ENCODE measurements at regions of chr12 and their contacts with region 1.

Region 1: GRCh38 chr12:132414634-132415326 is 75.2 kb upstream of the FBRSL1 start:
- DNase-seq: peak; percentile 83
- H3K27ac ChIP-seq: no peak overlapping the region; the same call in 1 of the 2 replicates
- CTCF ChIP-seq: peak; percentile 87

Region 2: GRCh38 chr12:132153501-132154340 is 261.1 kb before region 1 on chr12:
- CTCF ChIA-PET with region 1: interaction called, 18 read pairs
- POLR2A ChIA-PET with region 1: no interaction called
- DNase-seq: peak; percentile 69
- H3K27ac ChIP-seq: peak overlapping the region; percentile 27
- CTCF ChIP-seq: peak; percentile 92

Region 3: GRCh38 chr12:132196038-132196872 is 218.5 kb before region 1 on chr12:
- CTCF ChIA-PET with region 1: no interaction called
- POLR2A ChIA-PET with region 1: no interaction called
- DNase-seq: no peak
- H3K27ac ChIP-seq: 0 out of 2 replicates have a peak overlapping the region, but pooled peaks have one; percentile 1
- CTCF ChIP-seq: no peak

Region 4: GRCh38 chr12:132384916-132385774 is 29.6 kb before region 1 on chr12:
- CTCF ChIA-PET with region 1: no interaction called
- POLR2A ChIA-PET with region 1: no interaction called
- DNase-seq: no peak
- H3K27ac ChIP-seq: no peak overlapping the region
- CTCF ChIP-seq: no peak

Region 5: DNA sequence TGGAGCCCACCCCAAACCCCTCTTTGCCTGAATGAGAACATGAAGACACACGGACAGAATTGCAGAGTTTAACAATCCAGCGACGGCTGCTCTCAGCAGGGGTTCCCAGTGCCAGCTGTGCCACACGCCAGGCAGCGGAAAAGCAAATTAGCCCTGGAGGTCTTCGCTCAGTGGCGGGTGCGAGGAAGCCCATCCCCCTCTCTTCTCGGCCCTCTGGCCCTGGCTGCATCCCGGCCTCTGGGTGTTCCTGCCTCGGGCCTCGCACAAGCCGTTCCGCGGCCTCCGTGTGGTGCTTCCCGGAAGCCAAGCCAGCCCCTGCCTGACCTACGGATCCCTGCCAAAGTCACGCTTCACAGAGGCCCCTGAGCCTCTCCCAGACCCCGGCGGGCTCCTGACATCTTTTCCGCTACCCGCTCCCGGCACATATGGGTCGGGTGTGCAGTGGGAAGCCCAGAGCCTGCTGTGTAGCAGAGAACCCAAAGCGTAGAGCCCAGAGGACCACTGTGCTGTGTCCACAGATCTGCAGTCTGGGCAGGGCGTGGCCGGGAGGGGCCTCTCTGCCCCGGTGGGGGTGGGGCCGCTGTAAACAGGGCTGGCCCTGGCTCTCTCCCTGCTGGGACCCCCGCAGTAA is 14.7 kb before region 1 on chr12:
- CTCF ChIA-PET with region 1: interaction called, 11 read pairs
- POLR2A ChIA-PET with region 1: no interaction called
- DNase-seq: no peak
- H3K27ac ChIP-seq: no peak overlapping the region
- CTCF ChIP-seq: no peak

Region 6: GRCh38 chr12:132523576-132524331 is 109.0 kb after region 1 on chr12:
- CTCF ChIA-PET with region 1: interaction called, 10 read pairs
- POLR2A ChIA-PET with region 1: no interaction called
- DNase-seq: peak; percentile 55
- H3K27ac ChIP-seq: peak overlapping the region; percentile 96
- CTCF ChIP-seq: peak; percentile 58

Region 7: GRCh38 chr12:132560614-132561426 is 146.0 kb after region 1 on chr12:
- CTCF ChIA-PET with region 1: interaction called, 40 read pairs
- POLR2A ChIA-PET with region 1: no interaction called
- DNase-seq: peak; percentile 80
- H3K27ac ChIP-seq: peak overlapping the region; percentile 66
- CTCF ChIP-seq: peak; percentile 85

Region 8: GRCh38 chr12:132614861-132615578 is 200.2 kb after region 1 on chr12:
- CTCF ChIA-PET with region 1: interaction called, 12 read pairs
- POLR2A ChIA-PET with region 1: no interaction called
- DNase-seq: peak; percentile 71
- H3K27ac ChIP-seq: no peak overlapping the region
- CTCF ChIP-seq: peak; percentile 87